ENCODE measurements at regions of chr12 and their contacts with region 1.

Region 1: DNA sequence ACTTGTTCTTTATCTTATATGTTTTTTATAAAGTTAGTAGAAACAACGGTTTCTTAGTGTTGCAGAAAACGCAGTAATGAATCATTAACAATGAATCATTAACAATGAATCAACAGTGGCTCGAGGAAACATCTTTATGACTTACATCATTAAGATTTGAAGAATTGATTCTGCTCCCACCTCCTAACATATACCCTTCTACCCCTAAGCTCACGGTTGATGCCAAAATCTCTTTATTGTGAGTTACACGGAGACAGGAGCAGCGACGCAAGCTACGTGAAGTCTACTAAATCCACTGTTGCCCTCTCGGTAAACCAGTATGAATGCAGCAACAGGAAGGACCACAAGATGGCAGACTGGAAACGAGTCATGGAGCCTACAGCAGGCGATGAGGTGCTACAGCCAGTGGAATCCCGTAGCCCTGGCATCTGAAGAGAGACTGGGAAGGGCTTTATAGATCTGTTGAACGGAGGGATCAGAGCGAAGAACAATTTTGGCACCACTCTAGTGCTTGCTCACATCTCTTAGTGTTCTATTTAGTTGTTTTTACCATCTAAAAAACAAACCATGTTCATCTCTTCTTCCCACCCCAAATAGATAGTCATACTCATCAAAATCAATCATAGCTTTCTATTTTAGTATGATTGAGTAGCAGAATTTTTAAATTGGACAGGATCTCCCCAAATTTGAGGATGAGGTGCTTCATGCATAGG is 332.7 kb downstream of the DUSP6 start:
- DNase-seq: peak; percentile 59 to 94 (median 89)
- H3K4me3 ChIP-seq: peak overlapping the region; percentile 57 to 76 (median 74)
- H3K27ac ChIP-seq: no peak overlapping the region
- H3K4me1 ChIP-seq: no peaks in the 10 kb centered on the region
- H3K27me3 ChIP-seq: no peaks in the 10 kb centered on the region
- CTCF ChIP-seq: peak; percentile 89

Region 2: GRCh38 chr12:88960213-88960878 is 59.2 kb before region 1 on chr12:
- intact Hi-C with region 1: no loop called
- DNase-seq: peak in 1 of 5 donors; percentile 37
- H3K4me3 ChIP-seq: no peak overlapping the region
- H3K27ac ChIP-seq: no peak overlapping the region
- H3K4me1 ChIP-seq: no peaks in the 10 kb centered on the region
- H3K27me3 ChIP-seq: no peaks in the 10 kb centered on the region
- CTCF ChIP-seq: no peak

Region 3: GRCh38 chr12:89524541-89525285 is 505.1 kb after region 1 on chr12 and contains the start of gene GALNT4:
- intact Hi-C with region 1: loop called (anchors 10 kb)
- DNase-seq: peak; percentile 92 to 97 (median 95)
- H3K4me3 ChIP-seq: peak within 1 kb of the TSS; percentile 95 to 100 (median 99)
- H3K27ac ChIP-seq: peak within 1 kb of the TSS; percentile 91 to 97
- H3K4me1 ChIP-seq: peaks cover 3 to 16% (median 15%) of the 10 kb centered on the region in 3 donors
- H3K27me3 ChIP-seq: no peaks in the 10 kb centered on the region
- CTCF ChIP-seq: peak; percentile 64
- total RNA-seq, gene GALNT4: 14.4 TPM

Measured in kidney (tissue), 22 donors.